ENCODE measurements at regions of chr19 and their contacts with region 1.

Region 1: GRCh38 chr19:8569066-8569771 is 8.0 kb downstream of the MYO1F start:
- DNase-seq: peak; percentile 69 to 93 (median 77)
- H3K4me3 ChIP-seq: peak overlapping the region; percentile 36 to 60
- H3K4me3 Mint-ChIP-seq: peak overlapping the region; percentile 60 to 97 (median 83)
- H3K27ac ChIP-seq: peak overlapping the region; percentile 41
- H3K27ac Mint-ChIP-seq: peak overlapping the region; percentile 92 to 99 (median 95)
- H3K4me1 ChIP-seq: peaks cover 96% of the 10 kb centered on the region
- H3K4me1 Mint-ChIP-seq: peaks cover 44 to 88% (median 68%) of the 10 kb centered on the region in 4 donors
- H3K27me3 ChIP-seq: no peaks in the 10 kb centered on the region
- H3K27me3 Mint-ChIP-seq: no peaks in the 10 kb centered on the region

Region 2: DNA sequence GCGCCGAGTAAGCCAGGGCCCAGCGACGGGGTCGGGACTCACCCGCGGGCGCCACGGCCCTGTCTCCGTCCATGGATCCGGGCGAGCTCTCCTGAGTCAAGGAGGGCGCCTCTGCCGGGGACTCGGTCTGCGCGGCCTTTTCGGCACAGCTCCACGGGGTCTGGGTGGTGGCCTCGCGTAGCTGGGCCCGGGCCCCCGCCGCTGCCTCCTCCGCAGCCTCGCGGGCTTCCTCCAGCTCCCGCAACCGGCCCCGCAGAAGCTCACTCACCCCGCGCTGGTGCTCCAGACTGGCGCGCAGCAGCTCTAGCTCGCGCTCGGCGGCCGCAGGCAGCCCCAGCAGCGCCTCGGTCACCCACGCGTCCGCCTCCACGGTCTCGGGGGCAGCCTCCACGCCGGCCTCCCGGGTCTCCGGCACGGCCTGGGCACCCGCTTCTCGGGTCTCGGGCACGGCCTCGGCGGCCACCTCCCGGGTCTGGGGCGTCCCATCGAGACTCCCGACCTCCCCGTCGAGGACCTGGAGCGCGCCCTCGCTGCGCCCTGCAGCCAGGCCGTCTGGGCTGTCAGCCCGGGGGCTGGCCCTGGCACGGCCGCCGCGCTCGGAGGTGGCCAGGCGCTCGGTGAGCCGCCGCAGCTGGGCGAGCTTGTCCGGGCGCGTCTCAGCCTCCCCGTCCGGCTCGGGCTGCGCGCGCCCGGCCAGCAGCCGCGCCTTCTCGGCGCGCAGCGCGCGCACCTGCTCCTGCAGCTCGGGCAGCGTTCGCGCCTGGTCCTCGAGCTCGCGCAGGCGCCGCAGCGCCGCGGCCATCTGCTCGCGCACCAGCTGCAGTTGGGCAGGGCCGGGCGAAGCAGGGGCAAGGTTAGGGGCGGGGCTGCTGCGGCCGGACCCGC is 234.5 kb before region 1 on chr19:
- CTCF ChIA-PET with region 1: no interaction called
- POLR2A ChIA-PET with region 1: no interaction called
- intact Hi-C with region 1: no loop called
- DNase-seq: peak in 2 of 5 donors; percentile 8 to 12
- H3K4me3 ChIP-seq: no peak overlapping the region
- H3K4me3 Mint-ChIP-seq: peak overlapping the region in 2 of 8 donors; percentile 17 to 43
- H3K27ac ChIP-seq: no peak overlapping the region
- H3K27ac Mint-ChIP-seq: no peak overlapping the region
- H3K4me1 ChIP-seq: peaks cover 7% of the 10 kb centered on the region
- H3K4me1 Mint-ChIP-seq: peaks cover 4 to 10% (median 5%) of the 10 kb centered on the region in 4 donors
- H3K27me3 ChIP-seq: peaks cover 9% of the 10 kb centered on the region
- H3K27me3 Mint-ChIP-seq: peaks cover 8 to 13% of the 10 kb centered on the region in 2 donors

Region 3: DNA sequence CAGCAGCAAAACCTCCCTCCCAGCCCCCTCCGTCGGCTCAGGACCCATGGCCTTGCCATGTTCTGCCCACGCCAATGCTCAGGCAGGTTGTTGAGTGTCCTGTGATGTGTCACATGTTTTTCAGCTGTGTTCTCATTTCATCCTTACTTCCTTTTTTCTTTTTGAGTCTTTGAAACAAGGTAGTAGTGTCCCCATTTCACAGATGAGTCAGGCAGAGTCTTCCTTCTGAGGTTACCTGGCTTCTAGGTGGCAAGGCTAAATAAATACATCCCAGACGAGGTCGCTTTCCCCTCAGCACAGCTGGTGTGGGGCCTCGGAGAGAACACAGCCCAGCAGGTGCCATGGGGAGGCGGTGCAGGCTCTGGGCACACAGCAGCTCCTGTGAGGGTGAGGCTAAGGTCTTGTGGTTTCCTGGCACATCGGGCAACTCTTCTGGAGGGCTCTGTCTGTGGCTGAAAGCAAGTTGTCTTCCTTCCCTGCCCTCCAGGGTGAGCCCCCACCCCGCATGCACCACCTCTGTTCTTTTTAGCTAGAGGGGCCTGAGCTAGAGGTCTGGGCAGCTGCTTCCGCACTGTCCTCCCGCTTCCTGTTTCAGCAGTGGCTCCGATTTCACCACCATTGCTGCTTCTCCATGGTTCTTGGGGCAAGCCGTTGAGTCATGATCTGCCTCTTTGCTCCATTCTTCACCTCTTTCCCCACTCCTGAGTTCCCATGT is 81.9 kb before region 1 on chr19:
- CTCF ChIA-PET with region 1: interaction called, 11 read pairs
- POLR2A ChIA-PET with region 1: interaction called, 8 read pairs
- intact Hi-C with region 1: no loop called
- DNase-seq: peak; percentile 66 to 76 (median 71)
- H3K4me3 ChIP-seq: no peak overlapping the region
- H3K4me3 Mint-ChIP-seq: peak overlapping the region; percentile 36 to 79 (median 66)
- H3K27ac ChIP-seq: peak overlapping the region; percentile 41
- H3K27ac Mint-ChIP-seq: peak overlapping the region; percentile 83 to 95 (median 89)
- H3K4me1 ChIP-seq: peaks cover 29% of the 10 kb centered on the region
- H3K4me1 Mint-ChIP-seq: peaks cover 24 to 50% (median 29%) of the 10 kb centered on the region in 4 donors
- H3K27me3 ChIP-seq: no peaks in the 10 kb centered on the region
- H3K27me3 Mint-ChIP-seq: no peaks in the 10 kb centered on the region

Region 4: DNA sequence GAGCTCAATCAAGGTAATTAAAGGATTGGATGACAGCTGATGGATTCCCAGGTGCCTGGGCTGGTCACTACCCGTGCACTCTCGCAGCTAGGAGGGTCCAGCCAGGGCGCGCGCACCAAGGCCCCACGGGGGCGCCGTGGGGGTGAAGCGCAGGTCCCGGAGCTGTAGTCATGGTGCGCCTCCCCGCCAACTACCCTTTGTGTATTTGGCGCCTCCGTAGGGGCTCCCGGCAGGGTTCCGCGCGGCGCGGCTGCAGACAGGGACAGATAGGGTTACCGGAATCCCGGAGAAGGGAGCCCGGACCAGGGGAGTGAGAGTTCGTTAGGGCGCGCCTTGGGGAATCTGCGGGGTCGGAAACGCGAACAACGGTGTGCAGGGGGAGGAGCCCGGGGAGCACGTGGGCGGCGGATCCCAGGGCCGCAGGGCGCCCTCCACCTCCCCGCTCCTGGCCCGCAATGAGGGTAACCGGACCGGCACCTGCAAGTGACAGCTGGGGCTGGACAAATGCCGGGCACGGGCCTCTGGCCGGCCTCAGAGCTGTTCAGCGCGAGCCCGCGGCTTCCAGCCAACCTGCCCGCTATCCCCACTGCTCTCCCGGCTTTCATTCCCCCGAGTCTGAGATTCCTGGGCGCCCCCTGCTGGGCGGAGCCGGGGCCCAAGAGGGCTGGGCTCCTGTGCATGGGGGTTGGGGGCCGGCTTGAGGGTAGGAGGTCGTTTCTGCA is 63.4 kb before region 1 on chr19:
- CTCF ChIA-PET with region 1: interaction called, 8 read pairs
- POLR2A ChIA-PET with region 1: interaction called, 17 read pairs
- intact Hi-C with region 1: no loop called
- DNase-seq: peak; percentile 44 to 71 (median 60)
- H3K4me3 ChIP-seq: peak overlapping the region; percentile 52 to 57
- H3K4me3 Mint-ChIP-seq: peak overlapping the region; percentile 88 to 95 (median 91)
- H3K27ac ChIP-seq: peak overlapping the region; percentile 22
- H3K27ac Mint-ChIP-seq: peak overlapping the region; percentile 74 to 94 (median 87)
- H3K4me1 ChIP-seq: peaks cover 13% of the 10 kb centered on the region
- H3K4me1 Mint-ChIP-seq: peaks cover 4 to 33% (median 9%) of the 10 kb centered on the region in 4 donors
- H3K27me3 ChIP-seq: no peaks in the 10 kb centered on the region
- H3K27me3 Mint-ChIP-seq: no peaks in the 10 kb centered on the region

Region 5: DNA sequence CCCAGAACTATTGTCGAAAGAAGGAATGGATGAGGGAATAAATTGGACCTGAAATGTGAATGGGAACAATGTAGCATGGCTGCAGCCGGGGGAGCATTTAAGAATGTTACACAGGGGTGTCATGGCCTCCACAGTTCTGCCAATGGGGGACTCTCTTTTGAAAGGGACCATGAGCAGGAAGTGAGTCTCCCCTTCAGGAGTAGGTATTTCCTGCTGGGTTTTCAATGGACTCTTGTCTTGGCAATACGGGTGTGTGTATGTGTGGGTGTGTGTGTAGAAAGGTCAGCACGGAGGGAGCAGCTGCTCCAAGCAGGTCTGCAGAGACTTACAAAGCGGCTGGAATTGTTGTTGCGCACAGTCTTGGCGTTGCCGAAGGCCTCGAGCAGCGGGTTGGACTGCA is 16.4 kb before region 1 on chr19:
- CTCF ChIA-PET with region 1: interaction called, 6 read pairs
- POLR2A ChIA-PET with region 1: interaction called, 18 read pairs
- intact Hi-C with region 1: no loop called
- DNase-seq: no peak
- H3K4me3 ChIP-seq: no peak overlapping the region
- H3K4me3 Mint-ChIP-seq: no peak overlapping the region
- H3K27ac ChIP-seq: no peak overlapping the region
- H3K27ac Mint-ChIP-seq: peak overlapping the region in 6 of 7 donors; percentile 0 to 81 (median 44)
- H3K4me1 ChIP-seq: peaks cover 7% of the 10 kb centered on the region
- H3K4me1 Mint-ChIP-seq: peaks cover 6 to 20% (median 11%) of the 10 kb centered on the region in 4 donors
- H3K27me3 ChIP-seq: no peaks in the 10 kb centered on the region
- H3K27me3 Mint-ChIP-seq: no peaks in the 10 kb centered on the region

Measured in CD4-positive, alpha-beta memory T cell (primary cell).